Dorsolateral prefrontal cortex (tissue), 120 donors: ENCODE measurements at regions of chr17 and their contacts with region 1.

Region 1: GRCh38 chr17:74430706-74431567 is 951 bp upstream of the GPRC5C start:
- DNase-seq: peak in 4 of 10 donors; percentile 38 to 69 (median 64)
- H3K4me3 ChIP-seq: peak overlapping the region; percentile 22 to 76 (median 59)
- H3K27ac ChIP-seq: peak overlapping the region in 52 of 59 donors; percentile 6 to 96 (median 76)
- H3K27me3 ChIP-seq: peaks cover 0 to 49% (median 20%) of the 10 kb centered on the region in 45 donors
- CTCF ChIP-seq: no peak

Region 2: GRCh38 chr17:74394977-74395376 is 36.0 kb before region 1 on chr17:
- intact Hi-C with region 1: loop called in 1 of 2 experiments (anchors 5 kb)
- DNase-seq: peak in 1 of 10 donors; percentile 77
- H3K4me3 ChIP-seq: no peak overlapping the region
- H3K27ac ChIP-seq: peak overlapping the region in 1 of 59 donors; percentile 92
- H3K27me3 ChIP-seq: no peaks in the 10 kb centered on the region
- CTCF ChIP-seq: no peak

Region 3: DNA sequence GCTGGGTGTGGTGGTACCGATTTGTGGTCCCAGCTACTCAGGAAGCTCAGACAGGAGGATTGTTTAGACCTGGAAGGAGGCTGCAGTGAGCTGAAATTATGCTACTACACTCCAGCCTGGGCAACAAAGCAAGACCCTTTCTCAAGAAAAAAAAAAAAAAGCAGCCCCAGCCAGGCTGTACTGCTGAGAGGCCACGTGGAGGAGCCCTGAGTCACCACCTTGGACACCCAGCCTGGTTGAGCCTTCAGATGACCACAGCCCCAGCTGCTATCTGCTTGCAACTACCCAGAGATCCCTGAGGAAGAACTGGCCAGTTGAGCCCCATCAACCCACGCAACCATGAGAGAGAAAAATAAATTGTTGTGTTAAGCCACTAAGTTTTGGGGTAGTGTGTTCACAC is 22.7 kb before region 1 on chr17:
- intact Hi-C with region 1: no loop called
- DNase-seq: no peak
- H3K4me3 ChIP-seq: no peak overlapping the region
- H3K27ac ChIP-seq: peak overlapping the region in 1 of 59 donors; percentile 45
- H3K27me3 ChIP-seq: peaks cover 0 to 11% (median 0%) of the 10 kb centered on the region in 45 donors
- CTCF ChIP-seq: no peak